ENCODE measurements at regions of chr12 and their contacts with region 1.

Region 1: DNA sequence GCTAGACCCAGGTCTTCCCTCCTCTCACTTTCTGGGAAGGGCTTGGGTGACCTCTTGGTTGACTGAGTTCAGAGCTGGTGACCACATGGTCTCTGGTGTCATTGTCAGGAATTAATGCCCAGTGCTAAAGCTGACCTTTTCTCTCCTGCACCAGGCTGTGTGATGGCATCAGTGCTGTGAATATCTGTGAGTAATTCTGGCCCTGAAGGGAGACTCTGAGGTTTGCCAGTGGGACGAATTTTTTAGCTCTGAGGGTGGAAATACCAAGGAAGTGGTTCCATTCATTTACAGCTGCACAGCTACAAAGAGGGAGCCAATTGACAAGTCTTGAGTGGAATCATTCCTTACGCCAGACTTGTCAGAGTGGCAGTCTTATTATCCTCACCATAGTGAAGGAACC is 6.2 kb upstream of the KRT86 start:
- DNase-seq: no peak
- H3K4me3 ChIP-seq: no peak overlapping the region
- H3K27ac ChIP-seq: no peak overlapping the region
- H3K4me1 ChIP-seq: no peaks in the 10 kb centered on the region
- H3K27me3 ChIP-seq: peaks cover 2 to 14% (median 8%) of the 10 kb centered on the region in 5 experiments

Region 2: DNA sequence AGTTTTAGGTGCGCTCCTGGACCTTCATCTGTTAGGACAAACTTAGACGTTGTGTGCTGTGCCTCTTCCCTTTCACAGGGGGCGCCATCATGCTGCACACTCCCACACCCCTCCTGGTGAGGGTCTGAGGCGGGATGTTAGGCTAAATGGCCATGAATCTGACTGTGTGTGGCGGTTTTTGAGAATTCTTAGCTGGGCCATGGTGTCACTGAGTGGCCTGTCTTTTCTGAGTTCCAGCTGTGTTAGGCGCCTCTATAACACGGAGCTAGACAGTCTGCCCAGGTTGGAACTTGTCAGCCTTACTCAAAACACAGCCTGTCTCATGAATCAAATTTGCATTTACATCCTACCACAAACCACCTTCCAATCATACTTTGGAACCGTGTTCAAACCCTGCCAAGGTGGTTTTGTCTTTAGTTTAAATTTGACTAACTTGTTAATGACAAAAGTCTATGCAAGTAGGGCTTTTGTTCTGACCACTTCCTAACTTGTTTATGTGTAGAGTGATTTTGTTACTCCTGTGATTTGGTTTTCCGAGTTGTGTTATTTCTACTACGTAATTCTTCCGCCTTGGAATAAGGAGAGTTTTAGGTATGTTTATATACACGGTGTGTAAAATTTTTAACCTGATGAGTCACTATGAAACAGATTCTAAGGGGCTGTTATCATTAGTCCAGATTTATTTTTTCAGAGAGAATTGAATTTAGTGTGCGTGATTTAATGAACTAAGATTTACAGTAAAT is 297.1 kb before region 1 on chr12:
- CTCF ChIA-PET with region 1: no interaction called
- POLR2A ChIA-PET with region 1: no interaction called
- DNase-seq: peak in 2 of 3 donors; percentile 41 to 47
- H3K4me3 ChIP-seq: peak overlapping the region in 2 of 7 experiments; percentile 4 to 26
- H3K27ac ChIP-seq: no peak overlapping the region
- H3K4me1 ChIP-seq: peaks cover 49 to 62% (median 54%) of the 10 kb centered on the region in 4 experiments
- H3K27me3 ChIP-seq: no peaks in the 10 kb centered on the region

Region 3: GRCh38 chr12:52249051-52249461 is 19.2 kb before region 1 on chr12:
- CTCF ChIA-PET with region 1: interaction called, 11 read pairs
- POLR2A ChIA-PET with region 1: no interaction called
- DNase-seq: no peak
- H3K4me3 ChIP-seq: no peak overlapping the region
- H3K27ac ChIP-seq: no peak overlapping the region
- H3K4me1 ChIP-seq: peaks cover 0 to 35% (median 20%) of the 10 kb centered on the region in 4 experiments
- H3K27me3 ChIP-seq: peaks cover 0 to 34% (median 9%) of the 10 kb centered on the region in 5 experiments